ENCODE measurements at regions of chr12 and their contacts with region 1.

Region 1: DNA sequence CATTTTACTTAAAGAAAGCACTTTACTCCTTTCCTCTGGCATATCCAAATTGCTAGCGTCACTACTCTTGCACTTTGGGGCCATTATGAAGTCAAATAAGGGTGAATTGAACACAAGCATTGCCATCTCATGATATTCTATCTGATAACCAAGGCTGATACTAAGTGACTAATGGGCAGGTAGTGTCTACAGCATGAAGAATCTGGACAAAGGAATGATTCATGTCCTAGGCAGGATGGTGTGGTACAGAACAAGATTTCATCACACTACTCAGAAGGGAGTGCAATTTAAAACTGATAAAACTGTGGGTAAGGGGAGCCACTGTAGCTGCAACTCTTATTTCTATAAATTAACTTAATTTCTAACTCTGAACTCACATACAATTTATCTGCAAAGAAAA is 7.7 kb upstream of the SLC6A15 start:
- DNase-seq: peak; percentile 90
- H3K4me3 ChIP-seq: no peak overlapping the region
- H3K27ac ChIP-seq: peak overlapping the region; percentile 75
- H3K4me1 ChIP-seq: peaks cover 29% of the 10 kb centered on the region
- H3K27me3 ChIP-seq: no peaks in the 10 kb centered on the region
- CTCF ChIP-seq: no peak

Region 2: GRCh38 chr12:84946753-84947152 is 26.4 kb after region 1 on chr12:
- CTCF ChIA-PET with region 1: no interaction called
- dilution Hi-C with region 1: no loop called
- in situ Hi-C with region 1: no loop called
- intact Hi-C with region 1: loop called (anchors 2 kb)
- DNase-seq: no peak
- H3K4me3 ChIP-seq: no peak overlapping the region
- H3K27ac ChIP-seq: no peak overlapping the region
- H3K4me1 ChIP-seq: no peaks in the 10 kb centered on the region
- H3K27me3 ChIP-seq: no peaks in the 10 kb centered on the region
- CTCF ChIP-seq: no peak

Region 3: GRCh38 chr12:84964048-84964447 is 43.7 kb after region 1 on chr12:
- CTCF ChIA-PET with region 1: no interaction called
- dilution Hi-C with region 1: no loop called
- in situ Hi-C with region 1: no loop called
- intact Hi-C with region 1: no loop called
- DNase-seq: no peak
- H3K4me3 ChIP-seq: no peak overlapping the region
- H3K27ac ChIP-seq: no peak overlapping the region
- H3K4me1 ChIP-seq: no peaks in the 10 kb centered on the region
- H3K27me3 ChIP-seq: no peaks in the 10 kb centered on the region
- CTCF ChIP-seq: no peak

Measured in mammary epithelial cell (primary cell).